Left cardiac atrium (tissue), 4 donors: ENCODE measurements at regions of chr22 and their contacts with region 1.

Region 1: DNA sequence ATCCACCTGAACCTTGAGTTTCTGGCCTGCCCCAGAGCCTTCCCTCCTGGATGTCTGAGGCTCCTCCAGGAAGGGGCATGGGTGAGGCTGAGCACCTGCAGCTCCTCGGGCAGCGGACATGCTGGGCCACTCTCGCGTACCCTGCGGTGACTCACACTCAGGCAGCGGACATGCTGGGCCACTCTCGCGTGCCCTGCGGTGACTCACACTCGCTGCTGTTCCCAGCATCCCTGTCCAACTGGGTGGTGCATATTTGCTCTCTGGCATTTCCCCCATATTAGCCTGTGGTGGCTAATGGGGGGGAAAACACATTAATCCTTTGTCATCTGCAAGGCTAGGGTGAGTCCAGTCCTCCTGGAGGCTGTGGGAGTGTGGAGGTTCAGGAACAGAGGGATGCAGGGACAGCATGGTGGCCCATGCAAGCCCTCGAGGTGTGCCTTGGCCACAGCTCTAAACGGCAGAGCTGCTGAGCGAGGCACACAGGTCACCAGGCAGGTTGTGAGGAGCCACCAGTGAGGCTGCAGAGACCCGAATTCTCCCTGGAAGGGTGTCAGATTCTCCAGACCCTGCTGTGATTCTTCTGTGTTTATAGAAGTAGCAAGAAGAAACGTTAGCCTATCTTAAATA is 728.1 kb downstream of the BRD1 start:
- DNase-seq: peak; percentile 62
- ATAC-seq: peak in 1 of 2 donors; percentile 36

Region 2: GRCh38 chr22:49149721-49150608 is 50.4 kb after region 1 on chr22:
- intact Hi-C with region 1: loop called in 1 of 2 experiments (anchors 10 kb)
- DNase-seq: no peak
- ATAC-seq: no peak